MCF 10A (cell line): ENCODE measurements at regions of chr1 and their contacts with region 1.

Region 1: DNA sequence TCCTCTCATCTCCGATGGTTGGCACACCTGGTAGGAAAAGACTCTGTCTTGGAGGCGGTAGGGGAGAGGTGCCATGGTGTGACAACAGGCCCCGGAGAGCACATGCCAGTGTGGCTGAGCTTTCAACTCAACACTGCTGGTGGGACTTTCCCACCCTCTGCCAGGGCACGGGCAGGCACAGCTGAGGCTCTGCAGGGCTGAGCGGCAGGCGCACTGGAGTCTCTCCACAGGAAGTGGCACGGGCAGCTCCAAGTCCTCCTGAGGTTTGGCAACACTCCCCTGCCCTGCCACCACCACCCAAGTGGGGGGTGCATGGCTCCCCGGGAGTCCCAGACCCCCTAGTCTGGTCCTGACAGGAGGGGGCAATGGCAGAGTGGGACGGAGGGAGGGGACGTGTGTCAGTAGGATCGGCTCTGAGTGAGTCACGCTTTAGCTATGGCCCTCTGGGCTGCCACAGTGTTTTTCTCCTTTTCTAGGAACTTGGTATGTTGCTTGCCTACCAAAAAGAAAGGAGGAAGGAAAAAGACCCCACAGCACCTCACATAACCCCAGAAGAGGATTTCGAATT is 27.3 kb upstream of the EVA1B start:
- DNase-seq: peak; percentile 77
- H3K4me3 Mint-ChIP-seq: peak overlapping the region; percentile 15
- H3K27ac Mint-ChIP-seq: peak overlapping the region; percentile 82
- H3K4me1 Mint-ChIP-seq: peaks cover 39% of the 10 kb centered on the region
- H3K27me3 Mint-ChIP-seq: no peaks in the 10 kb centered on the region
- CTCF ChIP-seq: no peak

Region 2: GRCh38 chr1:36300526-36300925 is 50.2 kb before region 1 on chr1:
- CTCF ChIA-PET with region 1: interaction called, 11 read pairs
- POLR2A ChIA-PET with region 1: interaction called, 10 read pairs
- intact Hi-C with region 1: no loop called
- DNase-seq: no peak
- H3K4me3 Mint-ChIP-seq: no peak overlapping the region
- H3K27ac Mint-ChIP-seq: peak overlapping the region; percentile 67
- H3K4me1 Mint-ChIP-seq: peaks cover 13% of the 10 kb centered on the region
- H3K27me3 Mint-ChIP-seq: no peaks in the 10 kb centered on the region
- CTCF ChIP-seq: no peak

Region 3: GRCh38 chr1:36420836-36421664 is 70.3 kb after region 1 on chr1:
- CTCF ChIA-PET with region 1: interaction called, 9 read pairs
- POLR2A ChIA-PET with region 1: interaction called, 3 read pairs
- intact Hi-C with region 1: loop called (anchors 2 kb)
- DNase-seq: peak; percentile 83
- H3K4me3 Mint-ChIP-seq: no peak overlapping the region
- H3K27ac Mint-ChIP-seq: peak overlapping the region; percentile 76
- H3K4me1 Mint-ChIP-seq: peaks cover 14% of the 10 kb centered on the region
- H3K27me3 Mint-ChIP-seq: no peaks in the 10 kb centered on the region
- CTCF ChIP-seq: peak; percentile 96

Region 4: GRCh38 chr1:36523850-36524249 is 173.1 kb after region 1 on chr1:
- CTCF ChIA-PET with region 1: no interaction called
- POLR2A ChIA-PET with region 1: no interaction called
- intact Hi-C with region 1: no loop called
- DNase-seq: no peak
- H3K4me3 Mint-ChIP-seq: no peak overlapping the region
- H3K27ac Mint-ChIP-seq: no peak overlapping the region
- H3K4me1 Mint-ChIP-seq: no peaks in the 10 kb centered on the region
- H3K27me3 Mint-ChIP-seq: no peaks in the 10 kb centered on the region
- CTCF ChIP-seq: no peak

Region 5: GRCh38 chr1:37338658-37339057 is 987.9 kb after region 1 on chr1:
- CTCF ChIA-PET with region 1: no interaction called
- POLR2A ChIA-PET with region 1: no interaction called
- intact Hi-C with region 1: no loop called
- DNase-seq: no peak
- H3K4me3 Mint-ChIP-seq: no peak overlapping the region
- H3K27ac Mint-ChIP-seq: no peak overlapping the region
- H3K4me1 Mint-ChIP-seq: no peaks in the 10 kb centered on the region
- H3K27me3 Mint-ChIP-seq: peaks cover 20% of the 10 kb centered on the region
- CTCF ChIP-seq: no peak